ENCODE measurements at regions of chr6 and their contacts with region 1.

Region 1: DNA sequence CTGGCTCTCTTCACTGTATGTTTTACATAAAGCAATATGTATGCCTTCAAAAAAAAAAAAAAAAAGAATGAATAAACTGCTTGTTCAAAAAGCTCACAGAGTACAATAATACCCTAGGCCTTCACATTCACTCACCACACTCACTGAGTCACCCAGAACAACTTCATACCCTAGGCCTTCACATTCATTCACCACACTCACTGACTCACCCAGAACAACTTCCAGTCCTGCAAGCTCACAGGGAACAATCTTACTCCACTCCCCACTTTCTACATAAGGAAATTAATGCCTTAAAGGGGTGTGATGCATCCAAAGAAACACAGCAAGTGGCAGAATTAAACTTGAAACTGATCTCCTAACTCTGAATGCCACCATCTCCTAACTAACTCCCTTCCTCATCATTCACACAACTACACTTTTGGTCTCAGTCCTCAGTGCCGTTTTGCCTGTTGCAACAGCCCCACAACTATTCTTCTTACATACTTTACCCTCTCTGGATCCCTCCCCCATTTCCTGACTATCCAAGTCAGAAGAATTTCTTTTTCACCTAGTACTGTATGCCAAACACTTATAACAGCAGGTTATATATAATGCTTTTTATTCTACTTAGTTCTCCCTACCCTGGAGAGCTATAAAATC is 34.2 kb downstream of the NHSL1 start:
- DNase-seq: peak; percentile 88
- ATAC-seq: peak; percentile 70
- H3K4me3 ChIP-seq: peak overlapping the region; percentile 28; the same call in 1 of the 2 replicates
- H3K27ac ChIP-seq: peak overlapping the region; percentile 95
- H3K4me1 ChIP-seq: peaks cover 54% of the 10 kb centered on the region
- H3K27me3 ChIP-seq: no peaks in the 10 kb centered on the region
- CTCF ChIP-seq: no peak

Region 2: GRCh38 chr6:138450445-138450844 is 14.7 kb before region 1 on chr6:
- CTCF ChIA-PET with region 1: interaction called, 3 read pairs
- POLR2A ChIA-PET with region 1: interaction called, 12 read pairs
- intact Hi-C with region 1: loop called (anchors 2 kb)
- DNase-seq: no peak
- ATAC-seq: no peak
- H3K4me3 ChIP-seq: no peak overlapping the region
- H3K27ac ChIP-seq: no peak overlapping the region
- H3K4me1 ChIP-seq: peaks cover 10% of the 10 kb centered on the region
- H3K27me3 ChIP-seq: no peaks in the 10 kb centered on the region
- CTCF ChIP-seq: no peak

Region 3: GRCh38 chr6:138509371-138509770 is 44.2 kb after region 1 on chr6:
- CTCF ChIA-PET with region 1: interaction called, 3 read pairs
- POLR2A ChIA-PET with region 1: no interaction called
- intact Hi-C with region 1: loop called (anchors 2 kb)
- DNase-seq: peak; percentile 59
- ATAC-seq: peak; percentile 58; the same call in 1 of the 2 replicates
- H3K4me3 ChIP-seq: no peak overlapping the region
- H3K27ac ChIP-seq: no peak overlapping the region
- H3K4me1 ChIP-seq: 0 out of 2 replicates have a peak, but pooled peaks cover 6% of the 10 kb centered on the region
- H3K27me3 ChIP-seq: no peaks in the 10 kb centered on the region
- CTCF ChIP-seq: peak; percentile 76

Measured in PC-3 (cell line).